ENCODE measurements at regions of chr5 and their contacts with region 1.

Region 1: GRCh38 chr5:33433303-33434240 is 7.2 kb upstream of the TARS1 start:
- H3K4me3 ChIP-seq: no peak overlapping the region
- H3K27ac ChIP-seq: no peak overlapping the region
- H3K4me1 ChIP-seq: no peaks in the 10 kb centered on the region
- CTCF ChIP-seq: no peak

Region 2: DNA sequence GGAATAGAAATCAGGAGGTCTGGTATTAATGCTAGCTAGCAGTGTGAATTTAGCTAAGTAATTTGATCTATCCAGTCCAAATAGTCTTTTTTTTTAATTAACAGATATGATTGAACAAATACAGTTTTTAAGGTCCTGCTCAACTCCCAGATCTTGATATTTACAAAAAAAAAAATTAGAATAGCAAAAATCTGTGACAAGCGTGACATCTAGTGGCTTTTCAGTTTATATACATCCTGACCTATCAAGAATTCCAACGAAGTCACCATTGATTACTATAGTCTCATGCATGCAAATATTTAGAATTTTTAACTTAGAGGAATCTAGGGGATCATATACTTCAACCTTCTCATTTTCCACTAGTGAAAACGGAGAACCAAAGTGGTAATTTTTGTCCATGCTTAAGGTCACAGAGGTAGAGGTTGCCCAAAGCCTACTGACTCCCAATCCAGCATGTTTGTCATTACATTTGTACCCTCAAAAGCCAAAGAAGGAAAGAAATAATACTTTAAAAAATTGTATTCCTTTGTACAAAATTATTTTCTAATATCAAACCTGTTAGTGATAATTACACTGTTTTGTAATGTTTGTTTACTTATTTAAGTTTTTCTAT is 10.4 kb before region 1 on chr5:
- CTCF ChIA-PET with region 1: interaction called, 10 read pairs
- POLR2A ChIA-PET with region 1: no interaction called
- H3K4me3 ChIP-seq: no peak overlapping the region
- H3K27ac ChIP-seq: no peak overlapping the region
- H3K4me1 ChIP-seq: no peaks in the 10 kb centered on the region
- CTCF ChIP-seq: no peak

Region 3: GRCh38 chr5:33936004-33936380 is 502.4 kb after region 1 on chr5:
- CTCF ChIA-PET with region 1: interaction called, 35 read pairs
- POLR2A ChIA-PET with region 1: no interaction called
- H3K4me3 ChIP-seq: no peak overlapping the region; the same call in 1 of the 2 replicates
- H3K27ac ChIP-seq: no peak overlapping the region
- H3K4me1 ChIP-seq: no peaks in the 10 kb centered on the region
- CTCF ChIP-seq: no peak

Measured in HEK293 (cell line).